Common myeloid progenitor, CD34-positive (primary cell): ENCODE measurements at regions of chr11 and their contacts with region 1.

Region 1: GRCh38 chr11:67288452-67289225 is 464 bp upstream of the ANKRD13D start:
- DNase-seq: peak; percentile 95 to 97 (median 97)
- H3K4me3 ChIP-seq: peak overlapping the region; percentile 48 to 81 (median 64)
- H3K27ac ChIP-seq: peak overlapping the region; percentile 90 to 97
- H3K4me1 ChIP-seq: peaks cover 0 to 78% (median 68%) of the 10 kb centered on the region in 4 experiments
- H3K27me3 ChIP-seq: no peaks in the 10 kb centered on the region

Region 2: GRCh38 chr11:67113231-67113721 is 175.4 kb before region 1 on chr11:
- CTCF ChIA-PET with region 1: no interaction called
- POLR2A ChIA-PET with region 1: no interaction called
- DNase-seq: peak in 2 of 3 donors; percentile 29 to 31
- H3K4me3 ChIP-seq: no peak overlapping the region
- H3K27ac ChIP-seq: no peak overlapping the region
- H3K4me1 ChIP-seq: peaks cover 2 to 29% (median 14%) of the 10 kb centered on the region in 4 experiments
- H3K27me3 ChIP-seq: no peaks in the 10 kb centered on the region

Region 3: DNA sequence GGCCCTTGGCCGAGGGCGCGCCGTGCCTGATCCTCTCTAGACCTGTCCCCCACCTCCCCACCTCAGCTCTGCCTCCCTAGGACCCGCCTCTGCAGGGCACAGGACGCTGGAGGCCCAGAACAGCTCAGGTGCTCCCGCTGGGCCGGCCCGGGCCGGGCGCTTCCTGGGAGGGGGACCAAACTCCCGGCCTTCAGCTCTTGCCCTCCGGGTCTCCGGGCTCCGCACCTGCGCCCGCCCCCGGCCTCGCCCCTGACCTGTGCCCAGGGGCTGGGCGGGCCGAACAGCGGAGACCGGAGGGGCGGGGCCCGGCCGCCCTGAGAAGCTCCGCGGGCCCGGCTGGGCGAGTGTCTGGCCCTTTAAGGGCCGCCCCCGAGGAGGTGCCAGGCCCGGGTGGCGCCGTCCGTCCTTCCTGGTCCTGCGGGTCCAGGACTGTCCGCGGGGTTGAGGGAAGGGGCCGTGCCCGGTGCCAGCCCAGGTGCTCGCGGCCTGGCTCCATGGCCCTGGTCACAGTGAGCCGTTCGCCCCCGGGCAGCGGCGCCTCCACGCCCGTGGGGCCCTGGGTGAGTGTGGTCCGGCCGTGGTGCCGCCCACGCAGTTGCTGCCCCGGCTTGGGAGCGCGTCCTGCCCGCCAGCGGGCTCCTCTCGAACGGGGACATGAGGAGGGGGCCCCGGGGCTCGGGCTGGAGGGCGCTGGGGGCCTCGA is 14.6 kb after region 1 on chr11 and contains the start of gene SSH3:
- CTCF ChIA-PET with region 1: interaction called, 9 read pairs
- POLR2A ChIA-PET with region 1: interaction called, 79 read pairs
- DNase-seq: peak in 2 of 3 donors; percentile 42 to 59
- H3K4me3 ChIP-seq: peak within 1 kb of the TSS; percentile 65 to 88 (median 78)
- H3K27ac ChIP-seq: peak within 1 kb of the TSS in 1 of 2 experiments; percentile 64
- H3K4me1 ChIP-seq: peaks cover 0 to 33% (median 24%) of the 10 kb centered on the region in 4 experiments
- H3K27me3 ChIP-seq: no peaks in the 10 kb centered on the region